ENCODE measurements at regions of chr1 and their contacts with region 1.

Region 1: DNA sequence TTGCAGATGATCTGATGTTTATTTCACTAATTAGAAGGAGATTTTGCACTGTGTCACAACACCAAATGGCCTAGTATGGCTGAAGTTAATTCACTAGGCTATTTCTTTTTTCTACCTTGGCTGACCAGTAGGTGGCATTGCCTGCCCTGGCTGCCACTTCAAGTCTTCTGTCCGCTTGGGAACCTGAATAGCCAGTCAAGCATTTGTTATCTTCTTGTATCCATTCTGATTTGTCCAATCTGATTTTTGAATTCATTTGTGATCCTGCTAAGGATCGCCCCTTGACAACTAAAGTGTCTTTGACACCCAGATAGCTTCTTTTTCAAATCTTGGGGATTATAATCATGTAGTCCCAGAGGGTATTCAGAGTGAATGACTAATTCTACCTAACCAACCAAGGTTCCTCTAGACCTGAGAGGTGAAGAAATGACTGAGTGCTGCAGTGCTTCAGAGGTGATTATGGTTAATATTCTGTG is 99.4 kb downstream of the GIPC2 start:
- DNase-seq: peak; percentile 82
- ATAC-seq: peak; percentile 95
- H3K4me3 ChIP-seq: no peak overlapping the region
- H3K27ac ChIP-seq: no peak overlapping the region
- H3K4me1 ChIP-seq: no peaks in the 10 kb centered on the region; the same call in 1 of the 2 replicates
- H3K27me3 ChIP-seq: no peaks in the 10 kb centered on the region
- CTCF ChIP-seq: peak; percentile 97
- POLR2A ChIP-seq: peak; percentile 46; the same call in 1 of the 2 replicates
- RAD21 ChIP-seq: peak; percentile 98

Region 2: DNA sequence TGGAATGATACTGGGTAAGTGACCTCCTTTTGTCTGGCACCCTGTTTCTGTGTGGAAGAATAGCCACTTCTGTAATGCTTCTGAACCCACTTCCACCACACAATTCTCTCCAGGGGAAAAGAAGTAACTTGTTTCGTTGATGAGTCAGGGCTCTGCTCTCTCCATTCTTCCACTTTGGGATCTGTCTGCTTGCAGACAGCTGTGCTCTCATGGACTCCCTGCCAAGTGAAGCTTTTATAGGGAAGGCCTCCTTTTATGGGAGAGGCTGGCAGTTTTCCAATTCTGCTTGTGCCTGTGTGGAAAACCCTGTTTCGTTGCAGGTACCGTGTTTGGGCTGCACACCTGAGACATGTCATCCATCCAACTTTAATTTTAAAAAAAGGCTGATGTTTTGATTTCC is 31.3 kb after region 1 on chr1:
- CTCF ChIA-PET with region 1: no interaction called
- POLR2A ChIA-PET with region 1: no interaction called
- dilution Hi-C with region 1: no loop called
- in situ Hi-C with region 1: no loop called
- intact Hi-C with region 1: no loop called
- DNase-seq: peak; percentile 91
- ATAC-seq: peak; percentile 87
- H3K4me3 ChIP-seq: no peak overlapping the region
- H3K27ac ChIP-seq: no peak overlapping the region
- H3K4me1 ChIP-seq: peaks cover 9% of the 10 kb centered on the region
- H3K27me3 ChIP-seq: no peaks in the 10 kb centered on the region
- CTCF ChIP-seq: no peak
- POLR2A ChIP-seq: no peak
- RAD21 ChIP-seq: no peak

Region 3: GRCh38 chr1:78277253-78277652 is 132.1 kb after region 1 on chr1:
- CTCF ChIA-PET with region 1: interaction called, 3 read pairs
- POLR2A ChIA-PET with region 1: no interaction called
- dilution Hi-C with region 1: no loop called
- in situ Hi-C with region 1: no loop called
- intact Hi-C with region 1: loop called (anchors 2 kb)
- DNase-seq: peak; percentile 85
- ATAC-seq: peak; percentile 33
- H3K4me3 ChIP-seq: no peak overlapping the region
- H3K27ac ChIP-seq: peak overlapping the region; percentile 43
- H3K4me1 ChIP-seq: peaks cover 23% of the 10 kb centered on the region; the same call in 1 of the 2 replicates
- H3K27me3 ChIP-seq: no peaks in the 10 kb centered on the region
- CTCF ChIP-seq: no peak
- POLR2A ChIP-seq: no peak
- RAD21 ChIP-seq: no peak

Region 4: DNA sequence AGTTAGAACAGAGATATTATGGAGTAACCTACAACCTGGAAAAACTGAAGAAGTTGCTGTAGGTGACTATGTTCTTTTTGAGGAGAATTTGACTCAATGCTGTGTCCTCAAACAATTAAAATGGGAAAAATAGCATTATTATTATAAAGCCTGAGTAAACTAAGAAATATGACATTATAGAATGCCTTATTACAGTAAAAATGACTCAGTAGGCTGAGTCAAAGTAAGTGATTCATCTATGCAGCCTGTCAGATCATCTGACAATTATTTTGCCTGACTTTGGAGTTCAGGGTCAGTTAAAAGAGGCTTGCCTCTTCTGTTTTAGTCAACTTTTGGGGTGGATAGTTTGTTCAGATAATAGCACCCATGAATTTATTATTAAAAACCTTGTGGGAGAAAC is 194.9 kb after region 1 on chr1:
- CTCF ChIA-PET with region 1: interaction called, 3 read pairs
- POLR2A ChIA-PET with region 1: no interaction called
- dilution Hi-C with region 1: no loop called
- in situ Hi-C with region 1: no loop called
- intact Hi-C with region 1: loop called (anchors 10 kb)
- DNase-seq: peak; percentile 88
- ATAC-seq: peak; percentile 83
- H3K4me3 ChIP-seq: no peak overlapping the region
- H3K27ac ChIP-seq: no peak overlapping the region; the same call in 1 of the 2 replicates
- H3K4me1 ChIP-seq: peaks cover 7% of the 10 kb centered on the region; the same call in 1 of the 2 replicates
- H3K27me3 ChIP-seq: no peaks in the 10 kb centered on the region
- CTCF ChIP-seq: no peak
- POLR2A ChIP-seq: no peak
- RAD21 ChIP-seq: no peak

Region 5: DNA sequence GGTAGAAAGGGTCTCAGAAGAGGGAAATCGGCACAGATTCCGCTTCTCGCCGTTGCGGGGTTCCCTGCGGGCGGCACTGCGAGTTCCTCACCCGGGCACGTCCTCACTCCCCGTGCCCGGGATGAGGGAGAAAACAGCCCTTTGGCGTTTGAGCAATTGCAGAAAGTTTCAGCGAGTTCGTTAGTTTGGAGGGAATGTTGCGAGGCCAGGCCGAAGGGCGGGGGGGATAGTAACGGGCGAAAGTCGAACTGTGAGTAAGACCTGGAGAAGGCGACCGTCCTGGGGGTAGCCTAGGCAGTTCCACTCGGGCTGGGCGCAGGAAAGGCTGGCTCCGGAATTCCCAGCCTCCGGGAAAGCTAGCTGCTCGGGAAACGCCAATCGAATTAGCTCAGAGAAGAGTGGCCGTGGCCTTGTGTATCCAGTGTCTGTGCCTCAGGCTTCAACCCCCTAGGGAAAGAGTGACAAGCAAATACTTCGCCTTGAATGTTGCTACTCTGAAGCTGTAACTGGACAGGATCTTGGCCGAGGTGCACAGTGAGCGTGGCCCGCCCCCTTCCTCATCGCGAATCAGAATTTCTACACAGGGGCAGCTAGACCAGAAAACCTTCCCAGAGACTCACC is 346.4 kb after region 1 on chr1:
- CTCF ChIA-PET with region 1: interaction called, 3 read pairs
- POLR2A ChIA-PET with region 1: no interaction called
- dilution Hi-C with region 1: no loop called
- in situ Hi-C with region 1: no loop called
- intact Hi-C with region 1: loop called (anchors 1 kb)
- DNase-seq: peak; percentile 61
- ATAC-seq: peak; percentile 79
- H3K4me3 ChIP-seq: peak overlapping the region; percentile 61
- H3K27ac ChIP-seq: peak overlapping the region; percentile 47
- H3K4me1 ChIP-seq: no peaks in the 10 kb centered on the region; the same call in 1 of the 2 replicates
- H3K27me3 ChIP-seq: no peaks in the 10 kb centered on the region
- CTCF ChIP-seq: no peak
- POLR2A ChIP-seq: no peak
- RAD21 ChIP-seq: no peak

Measured in IMR-90 (cell line).